Activated CD4-positive, alpha-beta T cell treated with anti-CD3 and anti-CD28 coated beads, Interleukin-2, amount 10 ng/mL, durations not matched to agents 24 days and 14 days (primary cell): ENCODE measurements at regions of chr7 and their contacts with region 1.

Region 1: GRCh38 chr7:77415823-77416622 is at the start of gene GSAP:
- DNase-seq: peak; percentile 86
- H3K4me3 Mint-ChIP-seq: peak within 1 kb of the TSS; percentile 66
- H3K27ac Mint-ChIP-seq: peak within 1 kb of the TSS; percentile 36
- H3K4me1 Mint-ChIP-seq: peaks cover 23% of the 10 kb centered on the region
- H3K27me3 Mint-ChIP-seq: peaks cover 6% of the 10 kb centered on the region
- total RNA-seq, gene GSAP: 2.1 and 2.8 TPM in 2 replicates

Region 2: DNA sequence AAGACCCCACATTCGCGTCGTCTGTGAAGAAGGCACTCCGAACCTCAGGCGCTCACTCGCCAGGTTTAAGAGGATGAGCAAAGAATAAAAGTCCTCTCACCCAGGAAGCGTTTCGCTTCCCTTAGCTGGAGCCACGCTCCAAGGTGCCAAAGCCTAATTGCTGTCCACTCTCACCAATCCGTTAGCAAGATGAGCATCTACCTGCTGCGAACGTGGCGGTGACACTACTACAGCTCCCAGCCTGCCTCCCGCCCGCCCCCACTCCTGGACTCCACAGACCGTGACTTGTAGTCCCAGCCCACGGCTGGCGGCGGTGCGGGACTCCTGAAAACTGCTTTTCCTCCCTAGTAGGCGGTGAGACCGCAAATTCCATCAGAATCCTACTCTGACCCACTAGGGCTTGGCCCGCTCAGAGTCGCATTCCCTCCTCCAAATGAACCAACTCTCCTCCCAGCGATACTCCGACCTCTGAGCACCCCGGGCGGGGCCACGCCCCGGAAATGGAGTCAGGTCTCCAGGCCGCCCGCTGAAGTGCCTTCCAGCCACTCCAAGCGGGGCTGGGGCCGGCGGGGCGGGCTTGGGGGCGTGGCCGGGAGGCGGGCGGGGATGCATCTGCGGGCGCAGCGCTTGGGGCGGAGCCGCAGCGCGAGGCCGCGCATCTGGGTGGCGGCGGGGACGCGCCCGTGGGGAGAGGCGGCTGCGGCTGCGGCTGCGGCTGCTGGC is 120.6 kb after region 1 on chr7:
- intact Hi-C with region 1: loop called (anchors 5 kb)
- DNase-seq: peak; percentile 98
- H3K4me3 Mint-ChIP-seq: peak overlapping the region; percentile 98
- H3K27ac Mint-ChIP-seq: peak overlapping the region; percentile 94
- H3K4me1 Mint-ChIP-seq: peaks cover 12% of the 10 kb centered on the region
- H3K27me3 Mint-ChIP-seq: no peaks in the 10 kb centered on the region